ENCODE measurements at regions of chr20 and their contacts with region 1.

Region 1: DNA sequence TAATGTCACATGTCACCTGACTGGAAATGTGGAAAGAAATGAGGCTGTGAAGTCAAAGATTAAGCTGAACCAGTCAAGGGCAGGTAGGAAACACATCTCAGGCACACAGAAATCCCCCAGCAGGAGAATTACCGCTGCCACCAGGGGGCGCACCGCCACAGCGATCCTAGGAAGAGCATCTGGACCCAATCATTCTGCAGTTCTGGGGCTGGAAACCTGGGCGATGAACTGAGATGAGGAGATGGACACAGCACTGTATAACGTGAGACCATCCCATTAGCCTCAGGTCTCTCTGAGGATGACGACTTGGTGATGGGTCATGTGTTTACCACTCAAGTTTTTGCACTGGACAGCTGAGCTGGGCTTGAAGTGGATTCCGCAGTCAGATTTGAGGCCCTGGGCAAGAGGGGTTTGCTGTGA is 6.5 kb upstream of the SLC24A3 start:
- DNase-seq: no peak
- H3K4me3 ChIP-seq: no peak overlapping the region
- H3K27ac ChIP-seq: no peak overlapping the region
- H3K4me1 ChIP-seq: peaks cover 0 to 16% (median 5%) of the 10 kb centered on the region in 3 donors
- H3K27me3 ChIP-seq: peaks cover 0 to 5% (median 0%) of the 10 kb centered on the region in 4 donors
- CTCF ChIP-seq: peak; percentile 70 to 93 (median 86)
- POLR2A ChIP-seq: no peak

Region 2: GRCh38 chr20:19003366-19004336 is 202.3 kb before region 1 on chr20:
- intact Hi-C with region 1: no loop called
- DNase-seq: no peak
- H3K4me3 ChIP-seq: no peak overlapping the region
- H3K27ac ChIP-seq: no peak overlapping the region
- H3K4me1 ChIP-seq: no peaks in the 10 kb centered on the region
- H3K27me3 ChIP-seq: no peaks in the 10 kb centered on the region
- CTCF ChIP-seq: no peak
- POLR2A ChIP-seq: no peak

Region 3: DNA sequence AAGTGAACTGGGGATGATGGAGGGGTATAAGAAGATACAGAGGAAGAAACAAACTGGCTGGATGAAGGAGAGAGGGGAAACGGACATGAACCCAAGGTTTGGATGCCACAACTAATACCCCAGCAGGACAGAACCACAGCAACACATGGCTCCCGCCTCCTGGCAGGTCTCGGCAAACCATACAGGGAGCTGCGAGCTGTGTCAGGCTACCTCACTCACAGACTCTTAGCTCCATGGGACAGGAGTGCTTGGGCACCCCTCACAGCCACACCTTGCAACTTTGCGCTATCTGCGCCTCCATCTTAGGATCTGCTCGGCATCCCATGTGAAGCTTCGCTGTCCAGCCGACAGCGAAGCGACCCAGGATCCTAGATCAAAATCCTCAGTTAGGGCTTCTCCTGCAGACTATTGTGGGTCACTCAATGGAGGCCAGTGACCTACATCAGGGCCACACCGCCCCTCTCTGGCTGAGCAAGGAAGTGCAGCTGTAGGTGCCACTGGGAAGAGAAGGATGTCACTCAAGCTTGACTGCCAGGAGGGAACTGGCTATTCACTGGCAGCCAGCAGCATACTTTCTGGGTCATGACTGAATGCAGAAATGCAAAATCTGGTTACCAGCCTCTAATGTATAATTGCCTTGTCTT is 377.7 kb after region 1 on chr20:
- intact Hi-C with region 1: loop called (anchors 5 kb)
- DNase-seq: no peak
- H3K4me3 ChIP-seq: no peak overlapping the region
- H3K27ac ChIP-seq: no peak overlapping the region
- H3K4me1 ChIP-seq: no peaks in the 10 kb centered on the region
- H3K27me3 ChIP-seq: no peaks in the 10 kb centered on the region
- CTCF ChIP-seq: peak in 5 of 6 experiments; percentile 69 to 90 (median 74)
- POLR2A ChIP-seq: no peak

Region 4: DNA sequence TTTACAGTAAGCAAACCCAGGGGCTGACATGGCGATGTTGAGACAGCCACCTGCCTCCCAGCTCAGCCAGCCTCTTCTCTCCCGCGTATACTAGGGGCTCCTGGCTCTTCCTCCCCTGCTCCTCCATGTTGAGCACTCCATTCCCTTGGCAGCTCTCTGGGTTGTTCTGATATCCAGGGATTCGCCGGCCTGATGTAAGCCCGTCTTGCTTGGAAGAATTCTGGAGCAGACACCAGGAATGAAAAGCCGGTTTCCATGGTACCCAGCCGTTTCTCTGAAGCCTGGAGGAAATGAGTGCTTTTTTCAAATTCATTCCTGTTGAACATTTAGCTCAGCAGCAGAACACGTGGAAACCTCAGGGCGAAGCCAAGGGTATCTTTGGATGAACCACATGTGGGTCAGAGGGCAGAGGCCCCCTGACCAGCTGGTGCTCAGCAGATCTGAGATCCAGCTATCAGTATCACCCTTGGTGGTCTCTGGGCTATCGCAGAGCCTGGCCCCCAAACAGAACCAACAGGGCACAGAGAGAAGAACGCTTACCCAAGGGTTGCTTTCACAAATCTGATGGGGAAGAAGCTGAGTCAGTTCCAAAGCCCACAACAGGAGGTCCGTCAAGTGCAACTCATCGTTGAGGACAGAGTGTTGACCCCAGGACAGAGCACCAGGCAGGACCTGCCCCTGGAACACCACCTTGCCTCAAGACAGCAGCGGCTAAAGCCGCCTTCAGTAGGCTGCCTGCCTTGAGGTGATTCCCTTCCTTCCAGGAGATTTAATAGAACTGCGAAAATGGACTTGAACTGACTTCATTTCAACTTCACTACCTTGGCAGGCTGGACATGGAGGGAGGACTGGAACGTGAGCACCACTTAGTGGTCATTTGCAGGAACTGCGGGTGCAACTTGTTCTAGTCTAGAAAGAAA is 456.0 kb after region 1 on chr20:
- intact Hi-C with region 1: loop called (anchors 5 kb)
- DNase-seq: no peak
- H3K4me3 ChIP-seq: no peak overlapping the region
- H3K27ac ChIP-seq: no peak overlapping the region
- H3K4me1 ChIP-seq: peaks cover 0 to 10% (median 0%) of the 10 kb centered on the region in 3 donors
- H3K27me3 ChIP-seq: peaks cover 0 to 11% (median 0%) of the 10 kb centered on the region in 4 donors
- CTCF ChIP-seq: peak; percentile 89 to 99 (median 94)
- POLR2A ChIP-seq: no peak

Measured in esophagus squamous epithelium (tissue), 5 donors.